Body of pancreas (tissue), 4 donors: ENCODE measurements at regions of chr16 and their contacts with region 1.

Region 1: GRCh38 chr16:4511441-4512082 is 27.0 kb downstream of the CDIP1 start:
- DNase-seq: peak; percentile 74 to 88 (median 81)
- ATAC-seq: peak; percentile 77
- H3K4me3 ChIP-seq: no peak overlapping the region
- H3K27ac ChIP-seq: peak overlapping the region in 2 of 4 donors; percentile 10 to 17
- H3K4me1 ChIP-seq: peaks cover 31% of the 10 kb centered on the region
- H3K27me3 ChIP-seq: no peaks in the 10 kb centered on the region
- CTCF ChIP-seq: peak; percentile 40 to 77 (median 67)
- POLR2A ChIP-seq: no peak

Region 2: DNA sequence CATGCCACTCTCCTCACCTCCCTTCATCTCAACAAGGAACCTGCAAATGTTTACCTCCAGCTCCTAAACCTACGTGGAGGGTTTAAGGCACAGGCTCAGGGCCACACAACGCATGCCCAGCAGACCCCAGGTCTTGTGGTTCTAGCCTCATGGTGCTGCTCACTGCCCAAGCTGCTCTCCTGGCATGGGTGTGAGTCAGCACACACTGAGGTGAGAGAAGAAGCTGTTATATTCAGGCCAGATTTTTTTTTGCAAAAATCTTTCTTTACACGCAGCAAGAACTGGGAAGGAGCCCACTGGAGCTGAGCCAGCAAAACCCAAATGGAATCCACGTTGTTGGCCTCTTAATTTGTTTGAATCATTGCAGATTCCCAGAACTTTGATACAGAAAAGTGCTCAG is 39.0 kb after region 1 on chr16:
- intact Hi-C with region 1: loop called (anchors 5 kb)
- DNase-seq: no peak
- ATAC-seq: no peak
- H3K4me3 ChIP-seq: no peak overlapping the region
- H3K27ac ChIP-seq: no peak overlapping the region
- H3K4me1 ChIP-seq: peaks cover 5% of the 10 kb centered on the region
- H3K27me3 ChIP-seq: no peaks in the 10 kb centered on the region
- CTCF ChIP-seq: no peak
- POLR2A ChIP-seq: no peak

Region 3: GRCh38 chr16:4580245-4580644 is 68.7 kb after region 1 on chr16:
- intact Hi-C with region 1: loop called (anchors 10 kb)
- DNase-seq: peak in 1 of 4 donors; percentile 33
- ATAC-seq: peak; percentile 76
- H3K4me3 ChIP-seq: no peak overlapping the region
- H3K27ac ChIP-seq: peak overlapping the region in 1 of 4 donors; percentile 25
- H3K4me1 ChIP-seq: peaks cover 6% of the 10 kb centered on the region
- H3K27me3 ChIP-seq: no peaks in the 10 kb centered on the region
- CTCF ChIP-seq: no peak
- POLR2A ChIP-seq: no peak